Prostate gland (tissue), 2 donors: ENCODE measurements at regions of chr18 and their contacts with region 1.

Region 1: DNA sequence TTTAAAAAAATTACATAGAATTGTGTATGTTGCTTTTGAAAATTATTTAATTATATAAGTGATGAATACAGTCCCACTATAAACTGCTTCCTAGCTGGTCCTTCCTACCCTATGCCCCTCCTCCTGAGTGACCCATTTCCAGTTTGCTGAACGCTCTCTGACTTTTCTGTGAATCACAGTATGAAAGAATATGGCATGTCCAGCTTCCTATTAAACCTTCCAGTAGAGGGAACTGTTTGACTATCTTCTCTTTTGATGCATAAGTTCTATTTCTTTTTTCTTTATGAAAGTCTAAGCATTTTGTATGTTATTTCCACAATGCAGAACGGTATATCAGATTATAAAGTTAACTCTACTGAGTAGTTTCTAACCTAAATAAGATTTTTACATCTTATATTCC is 41.3 kb downstream of the PSMG2 start:
- DNase-seq: no peak
- H3K4me3 ChIP-seq: no peak overlapping the region
- H3K27ac ChIP-seq: no peak overlapping the region
- H3K4me1 ChIP-seq: no peaks in the 10 kb centered on the region
- H3K27me3 ChIP-seq: no peaks in the 10 kb centered on the region
- CTCF ChIP-seq: peak in 3 of 4 experiments; percentile 41 to 66 (median 55)
- POLR2A ChIP-seq: no peak

Region 2: DNA sequence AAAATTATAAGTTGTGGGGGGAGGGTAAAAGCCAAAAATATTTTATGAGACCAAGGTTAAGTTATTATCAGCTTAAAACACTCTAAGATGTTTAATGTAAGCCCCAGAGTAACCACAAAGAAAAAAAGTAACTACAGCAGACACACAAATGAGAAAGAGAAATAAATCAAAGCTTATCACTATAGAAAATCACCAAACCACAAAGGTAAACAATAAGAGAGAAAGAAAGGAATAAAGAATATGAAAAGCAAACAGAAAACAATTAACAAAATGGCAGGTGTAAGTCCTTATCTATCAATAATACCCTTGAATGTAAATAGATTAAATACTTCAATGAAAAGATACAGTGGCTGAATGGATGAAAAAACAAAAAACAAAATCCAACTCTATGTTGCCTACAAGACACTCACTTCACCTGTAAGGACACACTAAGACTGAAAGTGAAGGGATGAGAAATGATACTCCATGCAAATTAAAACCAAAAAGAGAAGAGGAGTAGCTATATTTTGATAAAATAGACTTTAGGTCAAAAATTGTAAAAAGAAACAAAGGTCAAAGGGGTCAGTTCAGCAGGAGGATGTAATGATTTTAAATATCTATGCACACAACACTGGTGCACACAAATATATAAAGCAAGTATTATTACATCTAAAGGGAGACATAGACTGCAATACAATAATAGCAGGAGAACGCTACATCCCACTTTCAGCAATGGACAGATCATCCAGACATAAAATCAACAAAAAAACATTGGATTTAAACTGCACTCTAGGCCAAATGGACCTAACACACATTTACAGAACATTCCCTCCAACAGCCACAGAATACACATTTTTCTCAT is 59.2 kb after region 1 on chr18:
- intact Hi-C with region 1: no loop called
- DNase-seq: no peak
- H3K4me3 ChIP-seq: no peak overlapping the region
- H3K27ac ChIP-seq: no peak overlapping the region
- H3K4me1 ChIP-seq: no peaks in the 10 kb centered on the region
- H3K27me3 ChIP-seq: no peaks in the 10 kb centered on the region
- CTCF ChIP-seq: no peak
- POLR2A ChIP-seq: no peak

Region 3: DNA sequence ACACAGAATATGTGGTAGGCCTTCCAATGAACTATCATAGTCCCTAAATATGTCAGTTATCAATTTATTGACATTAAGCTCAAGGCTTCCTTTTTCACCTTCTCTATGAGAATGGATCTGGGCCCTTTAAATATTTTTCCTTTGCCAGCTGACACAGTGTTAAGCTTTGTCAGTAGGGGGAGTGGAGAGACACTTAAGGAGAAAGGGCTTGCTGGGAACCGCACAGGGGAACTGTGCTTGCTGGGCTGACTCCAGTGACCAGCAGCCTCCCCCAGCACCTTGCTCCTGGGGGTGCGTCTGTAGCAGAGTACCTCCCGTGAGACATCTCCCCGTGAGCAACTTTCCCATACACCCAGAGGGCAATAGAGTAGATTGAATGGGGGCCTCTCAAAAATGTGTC is 146.4 kb after region 1 on chr18:
- intact Hi-C with region 1: loop called (anchors 10 kb)
- DNase-seq: no peak
- H3K4me3 ChIP-seq: no peak overlapping the region
- H3K27ac ChIP-seq: no peak overlapping the region
- H3K4me1 ChIP-seq: no peaks in the 10 kb centered on the region
- H3K27me3 ChIP-seq: no peaks in the 10 kb centered on the region
- CTCF ChIP-seq: no peak
- POLR2A ChIP-seq: no peak

Region 4: GRCh38 chr18:12934454-12935071 is 190.5 kb after region 1 on chr18:
- intact Hi-C with region 1: loop called (anchors 5 kb)
- DNase-seq: peak; percentile 67
- H3K4me3 ChIP-seq: no peak overlapping the region
- H3K27ac ChIP-seq: no peak overlapping the region
- H3K4me1 ChIP-seq: no peaks in the 10 kb centered on the region
- H3K27me3 ChIP-seq: no peaks in the 10 kb centered on the region
- CTCF ChIP-seq: peak; percentile 59 to 90 (median 81)
- POLR2A ChIP-seq: no peak